Activated CD8-positive, alpha-beta T cell treated with anti-CD3 and anti-CD28 coated beads, Interleukin-2, amount 10 ng/mL, durations not matched to agents 7 days and 5 days (primary cell): ENCODE measurements at regions of chr3 and their contacts with region 1.

Region 1: DNA sequence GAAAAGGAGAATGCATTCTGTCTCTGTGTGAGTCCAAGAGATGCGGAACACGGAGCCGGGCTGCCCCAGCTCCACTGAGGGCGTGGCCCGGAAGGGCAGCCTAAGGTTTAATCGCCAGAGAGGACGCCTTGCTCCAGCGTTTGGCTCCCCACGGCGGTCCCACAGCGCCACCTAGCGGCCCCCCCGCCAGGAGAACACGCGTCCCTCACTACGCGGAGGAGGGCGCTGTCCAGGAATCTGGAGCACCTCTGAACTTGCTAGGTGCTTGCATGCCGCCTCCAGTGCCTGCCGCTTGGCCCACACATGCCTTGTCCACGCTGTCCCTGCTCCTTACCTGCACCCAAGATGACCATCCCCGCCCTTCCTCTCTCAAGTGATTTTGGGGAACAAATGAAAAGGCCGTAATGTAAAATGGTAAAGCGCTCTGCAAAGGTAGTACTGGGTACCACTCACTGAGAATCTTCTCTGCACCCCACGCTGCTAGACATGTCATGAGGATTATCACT is 14.4 kb upstream of the MRPS22 start:
- DNase-seq: peak; percentile 92
- ATAC-seq: peak; percentile 99
- H3K4me3 Mint-ChIP-seq: peak overlapping the region; percentile 51
- H3K27ac Mint-ChIP-seq: no peak overlapping the region
- H3K4me1 Mint-ChIP-seq: peaks cover 20% of the 10 kb centered on the region
- H3K27me3 Mint-ChIP-seq: peaks cover 7% of the 10 kb centered on the region

Region 2: GRCh38 chr3:138935848-138936740 is 393.3 kb before region 1 on chr3:
- CTCF ChIA-PET with region 1: interaction called, 16 read pairs
- POLR2A ChIA-PET with region 1: no interaction called
- DNase-seq: peak; percentile 65
- ATAC-seq: peak; percentile 78
- H3K4me3 Mint-ChIP-seq: peak overlapping the region; percentile 61
- H3K27ac Mint-ChIP-seq: no peak overlapping the region
- H3K4me1 Mint-ChIP-seq: peaks cover 33% of the 10 kb centered on the region
- H3K27me3 Mint-ChIP-seq: peaks cover 68% of the 10 kb centered on the region

Region 3: GRCh38 chr3:139111392-139112229 is 217.8 kb before region 1 on chr3:
- CTCF ChIA-PET with region 1: interaction called, 55 read pairs
- POLR2A ChIA-PET with region 1: no interaction called
- DNase-seq: peak; percentile 75
- ATAC-seq: peak; percentile 66
- H3K4me3 Mint-ChIP-seq: no peak overlapping the region
- H3K27ac Mint-ChIP-seq: no peak overlapping the region
- H3K4me1 Mint-ChIP-seq: peaks cover 15% of the 10 kb centered on the region
- H3K27me3 Mint-ChIP-seq: peaks cover 13% of the 10 kb centered on the region

Region 4: DNA sequence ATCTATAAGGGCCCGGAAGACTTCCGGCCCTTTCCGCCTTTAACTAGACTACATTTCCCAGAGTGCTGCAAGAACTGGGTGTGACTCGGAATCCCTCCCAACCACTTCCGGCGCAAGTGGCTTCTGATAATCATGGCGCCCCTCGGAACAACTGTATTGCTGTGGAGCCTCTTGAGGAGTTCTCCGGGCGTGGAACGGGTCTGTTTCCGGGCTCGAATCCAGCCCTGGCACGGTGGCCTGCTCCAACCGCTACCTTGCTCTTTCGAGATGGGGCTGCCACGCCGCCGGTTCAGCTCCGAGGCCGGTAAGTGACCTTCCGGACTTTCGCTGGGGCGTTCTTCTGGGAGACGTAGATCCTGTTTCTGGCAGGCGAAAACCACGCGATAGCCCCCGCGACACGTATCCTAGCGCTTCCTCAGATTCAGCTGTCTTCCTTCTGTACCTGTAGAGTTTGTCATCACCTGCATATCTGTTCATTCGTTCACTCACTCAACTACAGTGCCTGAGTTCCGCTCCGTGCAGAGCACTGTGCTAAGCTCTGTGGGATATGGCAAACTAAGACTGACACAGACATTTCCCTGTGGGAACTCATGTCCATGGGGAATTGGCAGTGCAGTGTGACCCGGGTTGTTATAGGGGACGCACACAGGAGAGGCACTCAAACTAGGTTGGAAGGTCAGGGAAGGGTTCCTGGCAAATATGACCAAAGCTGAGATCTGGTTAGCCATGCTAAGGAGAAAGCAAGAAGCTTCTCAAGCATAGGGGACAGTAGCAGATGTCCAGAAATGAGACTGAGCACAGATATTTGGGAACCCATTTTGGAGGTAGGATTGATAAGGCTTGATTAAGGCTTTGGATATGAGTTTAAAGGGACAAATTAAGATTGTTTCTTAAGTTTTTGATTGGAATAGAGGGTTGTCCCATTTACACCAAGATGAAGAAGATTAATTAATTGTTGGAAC is 14.8 kb after region 1 on chr3 and contains the start of gene MRPS22:
- CTCF ChIA-PET with region 1: interaction called, 16 read pairs
- POLR2A ChIA-PET with region 1: no interaction called
- DNase-seq: peak; percentile 91
- ATAC-seq: peak; percentile 97
- H3K4me3 Mint-ChIP-seq: no peak within 1 kb of the TSS
- H3K27ac Mint-ChIP-seq: peak within 1 kb of the TSS; percentile 58
- H3K4me1 Mint-ChIP-seq: peaks cover 11% of the 10 kb centered on the region
- H3K27me3 Mint-ChIP-seq: no peaks in the 10 kb centered on the region
- total RNA-seq, gene MRPS22: 39.7 to 41.1 TPM

Region 5: DNA sequence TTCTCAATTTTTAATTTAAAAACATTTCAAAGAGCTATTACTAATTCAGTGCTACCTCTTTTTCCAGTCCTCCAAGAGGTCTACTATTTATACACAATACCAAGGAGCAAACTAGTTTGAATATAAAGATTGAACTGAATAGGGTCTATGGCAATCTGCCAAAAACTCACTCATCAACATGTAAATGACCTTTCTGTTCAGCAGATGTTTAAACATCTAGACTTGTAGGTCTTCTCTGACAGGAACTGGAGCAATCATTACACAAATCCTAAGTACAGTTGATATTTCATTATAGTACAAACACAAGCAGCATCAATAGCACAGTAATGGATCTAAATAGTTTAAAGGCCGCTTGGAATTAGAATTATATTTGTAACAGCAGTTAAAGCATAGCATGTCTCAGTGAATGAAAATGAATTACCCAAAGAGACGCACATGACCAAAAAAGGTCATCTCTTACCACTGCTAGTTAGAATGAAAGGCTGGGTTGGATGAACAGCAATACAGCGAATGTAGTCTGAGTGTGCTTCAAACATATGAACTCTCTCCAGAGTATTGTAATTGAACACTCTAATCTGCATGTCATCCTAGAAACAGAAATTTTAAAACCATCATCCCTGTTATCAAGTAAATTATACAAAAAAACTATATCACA is 49.3 kb after region 1 on chr3:
- CTCF ChIA-PET with region 1: no interaction called
- POLR2A ChIA-PET with region 1: no interaction called
- DNase-seq: no peak
- ATAC-seq: no peak
- H3K4me3 Mint-ChIP-seq: no peak overlapping the region
- H3K27ac Mint-ChIP-seq: no peak overlapping the region
- H3K4me1 Mint-ChIP-seq: peaks cover 4% of the 10 kb centered on the region
- H3K27me3 Mint-ChIP-seq: no peaks in the 10 kb centered on the region

Region 6: DNA sequence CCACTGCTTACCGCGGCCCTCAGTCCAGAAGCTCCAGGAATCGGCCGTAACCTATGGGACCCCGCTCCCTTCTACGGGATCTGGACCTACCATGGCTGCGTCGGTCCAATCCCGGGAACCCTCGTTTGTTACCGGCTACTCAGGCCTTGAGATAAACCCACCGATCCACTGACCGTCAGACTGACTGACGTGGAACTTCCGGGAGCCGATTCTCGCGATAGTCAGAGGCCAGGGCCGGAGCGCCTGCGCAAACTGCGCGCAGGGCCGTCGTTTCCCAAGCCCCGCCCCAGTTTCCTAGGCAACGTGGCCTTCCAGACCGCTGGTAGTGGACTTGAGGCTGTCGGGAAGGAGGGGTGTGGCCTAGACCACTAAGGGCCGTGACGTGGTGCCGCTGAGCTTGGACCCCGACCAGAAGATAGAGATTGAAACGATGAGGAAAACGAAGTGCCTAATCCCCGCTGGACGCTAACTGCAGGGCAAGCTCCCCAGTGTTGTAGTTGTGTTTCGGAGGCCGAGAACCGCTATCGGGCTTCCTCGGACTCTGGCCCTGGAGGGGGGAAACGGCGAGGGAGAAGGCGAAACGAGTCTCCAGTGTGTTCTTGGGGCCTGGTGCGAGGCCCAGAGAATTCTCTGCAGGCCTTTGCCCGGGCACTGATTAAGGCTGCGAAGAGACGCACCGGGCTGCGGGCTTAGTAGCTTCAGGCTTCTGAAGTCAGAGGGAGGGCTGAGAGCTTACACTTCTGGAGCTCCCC is 60.2 kb after region 1 on chr3 and contains the start of gene COPB2:
- CTCF ChIA-PET with region 1: no interaction called
- POLR2A ChIA-PET with region 1: no interaction called
- DNase-seq: peak; percentile 97
- ATAC-seq: peak; percentile 94
- H3K4me3 Mint-ChIP-seq: peak within 1 kb of the TSS; percentile 90
- H3K27ac Mint-ChIP-seq: peak within 1 kb of the TSS; percentile 93
- H3K4me1 Mint-ChIP-seq: peaks cover 40% of the 10 kb centered on the region
- H3K27me3 Mint-ChIP-seq: no peaks in the 10 kb centered on the region
- total RNA-seq, gene COPB2: 82.0 to 87.6 TPM